CD14-positive monocyte (primary cell): ENCODE measurements at regions of chr1 and their contacts with region 1.

Region 1: GRCh38 chr1:246506674-246507481 is at the start of gene SMYD3:
- DNase-seq: peak; percentile 44 to 71 (median 57)
- H3K4me3 ChIP-seq: peak within 1 kb of the TSS; percentile 73 to 88 (median 73)
- H3K4me3 Mint-ChIP-seq: peak within 1 kb of the TSS; percentile 93 to 98
- H3K27ac ChIP-seq: peak within 1 kb of the TSS in 1 of 2 donors; percentile 29
- H3K27ac Mint-ChIP-seq: peak within 1 kb of the TSS in 6 of 7 donors; percentile 38 to 87 (median 77)
- H3K4me1 ChIP-seq: peaks cover 9 to 15% of the 10 kb centered on the region in 2 donors
- H3K4me1 Mint-ChIP-seq: peaks cover 15% of the 10 kb centered on the region
- H3K27me3 ChIP-seq: no peaks in the 10 kb centered on the region
- H3K27me3 Mint-ChIP-seq: peaks cover 4 to 7% (median 6%) of the 10 kb centered on the region in 3 donors
- CTCF ChIP-seq: no peak
- polyA plus RNA-seq, gene SMYD3: 2.7 to 8.4 (median 4.0) TPM

Region 2: GRCh38 chr1:246459221-246459620 is 47.7 kb before region 1 on chr1:
- intact Hi-C with region 1: no loop called
- DNase-seq: no peak
- H3K4me3 ChIP-seq: no peak overlapping the region
- H3K4me3 Mint-ChIP-seq: no peak overlapping the region
- H3K27ac ChIP-seq: no peak overlapping the region
- H3K27ac Mint-ChIP-seq: no peak overlapping the region
- H3K4me1 ChIP-seq: no peaks in the 10 kb centered on the region
- H3K4me1 Mint-ChIP-seq: peaks cover 5% of the 10 kb centered on the region
- H3K27me3 ChIP-seq: no peaks in the 10 kb centered on the region
- H3K27me3 Mint-ChIP-seq: peaks cover 0 to 1% (median 0%) of the 10 kb centered on the region in 3 donors
- CTCF ChIP-seq: no peak

Region 3: GRCh38 chr1:246608616-246609376 is 101.9 kb after region 1 on chr1:
- intact Hi-C with region 1: loop called in 1 of 2 experiments (anchors 10 kb)
- DNase-seq: peak; percentile 86 to 94 (median 93)
- H3K4me3 ChIP-seq: peak overlapping the region in 1 of 3 experiments; percentile 46
- H3K4me3 Mint-ChIP-seq: peak overlapping the region; percentile 66 to 83
- H3K27ac ChIP-seq: peak overlapping the region; percentile 36 to 45
- H3K27ac Mint-ChIP-seq: peak overlapping the region; percentile 86 to 96 (median 94)
- H3K4me1 ChIP-seq: peaks cover 17 to 20% of the 10 kb centered on the region in 2 donors
- H3K4me1 Mint-ChIP-seq: peaks cover 25% of the 10 kb centered on the region
- H3K27me3 ChIP-seq: no peaks in the 10 kb centered on the region
- H3K27me3 Mint-ChIP-seq: peaks cover 0 to 4% (median 1%) of the 10 kb centered on the region in 3 donors
- CTCF ChIP-seq: peak; percentile 23

Region 4: DNA sequence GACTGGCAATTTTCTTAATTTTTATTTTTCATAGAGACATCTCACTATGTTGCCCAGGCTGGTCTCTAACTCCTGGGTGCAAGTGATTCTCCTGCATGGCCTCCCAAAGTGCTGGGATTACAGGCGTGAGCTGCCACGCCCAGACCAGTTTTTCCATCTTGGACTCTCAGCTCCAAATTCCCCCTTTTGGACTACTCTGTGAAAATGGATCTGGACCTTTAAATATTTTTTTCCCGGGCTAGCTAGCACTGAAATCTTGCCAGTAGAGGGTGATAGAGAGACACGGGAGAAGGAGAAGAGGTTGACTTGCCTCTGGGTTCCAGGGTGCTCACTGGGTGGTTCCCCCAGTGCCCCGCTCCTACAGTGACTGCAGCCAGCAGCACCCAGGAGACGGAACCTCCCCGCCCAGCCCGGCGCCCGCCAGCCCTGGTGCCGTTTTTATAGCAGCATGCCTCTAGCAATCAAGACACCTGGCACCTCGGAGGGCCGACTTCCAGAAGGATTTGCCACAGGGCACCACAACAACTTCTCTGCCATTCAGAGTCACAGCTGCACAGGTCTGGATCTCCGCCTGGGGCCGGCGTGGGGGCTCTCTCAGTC is 182.6 kb after region 1 on chr1:
- intact Hi-C with region 1: loop called in 1 of 2 experiments (anchors 10 kb)
- DNase-seq: peak; percentile 78 to 88 (median 83)
- H3K4me3 ChIP-seq: peak overlapping the region in 1 of 3 experiments; percentile 43
- H3K4me3 Mint-ChIP-seq: peak overlapping the region; percentile 48 to 65
- H3K27ac ChIP-seq: no peak overlapping the region
- H3K27ac Mint-ChIP-seq: peak overlapping the region in 2 of 7 donors; percentile 2 to 4
- H3K4me1 ChIP-seq: peaks cover 7 to 9% of the 10 kb centered on the region in 2 donors
- H3K4me1 Mint-ChIP-seq: peaks cover 11% of the 10 kb centered on the region
- H3K27me3 ChIP-seq: no peaks in the 10 kb centered on the region
- H3K27me3 Mint-ChIP-seq: peaks cover 0 to 5% (median 3%) of the 10 kb centered on the region in 3 donors
- CTCF ChIP-seq: peak; percentile 83

Region 5: DNA sequence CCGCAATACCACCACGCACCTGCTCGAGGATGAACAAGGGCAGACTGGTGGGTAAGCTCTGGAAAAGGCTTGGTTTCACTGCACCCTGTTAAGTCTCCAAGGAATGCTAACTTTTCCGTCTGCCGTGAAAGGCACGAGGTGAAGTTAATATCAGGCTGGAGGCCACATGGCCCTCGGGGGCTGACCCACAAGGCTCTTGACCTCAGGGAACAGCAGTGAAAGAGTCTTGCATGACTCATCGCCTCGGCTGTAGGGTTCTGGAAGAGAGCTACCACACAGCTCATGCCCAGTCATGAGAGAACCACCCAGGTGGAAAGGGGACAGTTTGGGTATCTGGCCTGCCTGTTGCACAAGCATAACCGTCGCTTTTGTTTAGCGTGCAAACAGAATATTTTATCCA is 242.0 kb after region 1 on chr1:
- intact Hi-C with region 1: loop called in 1 of 2 experiments (anchors 10 kb)
- DNase-seq: peak in 1 of 3 donors; percentile 15
- H3K4me3 ChIP-seq: no peak overlapping the region
- H3K4me3 Mint-ChIP-seq: no peak overlapping the region
- H3K27ac ChIP-seq: no peak overlapping the region
- H3K27ac Mint-ChIP-seq: no peak overlapping the region
- H3K4me1 ChIP-seq: peaks cover 0 to 3% of the 10 kb centered on the region in 2 donors
- H3K4me1 Mint-ChIP-seq: peaks cover 14% of the 10 kb centered on the region
- H3K27me3 ChIP-seq: no peaks in the 10 kb centered on the region
- H3K27me3 Mint-ChIP-seq: no peaks in the 10 kb centered on the region
- CTCF ChIP-seq: no peak

Region 6: GRCh38 chr1:246865921-246866320 is 359.0 kb after region 1 on chr1:
- intact Hi-C with region 1: no loop called
- DNase-seq: no peak
- H3K4me3 ChIP-seq: no peak overlapping the region
- H3K4me3 Mint-ChIP-seq: no peak overlapping the region
- H3K27ac ChIP-seq: no peak overlapping the region
- H3K27ac Mint-ChIP-seq: no peak overlapping the region
- H3K4me1 ChIP-seq: no peaks in the 10 kb centered on the region
- H3K4me1 Mint-ChIP-seq: no peaks in the 10 kb centered on the region
- H3K27me3 ChIP-seq: no peaks in the 10 kb centered on the region
- H3K27me3 Mint-ChIP-seq: no peaks in the 10 kb centered on the region
- CTCF ChIP-seq: no peak